HEK293 (cell line): ENCODE measurements at regions of chr19 and their contacts with region 1.

Region 1: DNA sequence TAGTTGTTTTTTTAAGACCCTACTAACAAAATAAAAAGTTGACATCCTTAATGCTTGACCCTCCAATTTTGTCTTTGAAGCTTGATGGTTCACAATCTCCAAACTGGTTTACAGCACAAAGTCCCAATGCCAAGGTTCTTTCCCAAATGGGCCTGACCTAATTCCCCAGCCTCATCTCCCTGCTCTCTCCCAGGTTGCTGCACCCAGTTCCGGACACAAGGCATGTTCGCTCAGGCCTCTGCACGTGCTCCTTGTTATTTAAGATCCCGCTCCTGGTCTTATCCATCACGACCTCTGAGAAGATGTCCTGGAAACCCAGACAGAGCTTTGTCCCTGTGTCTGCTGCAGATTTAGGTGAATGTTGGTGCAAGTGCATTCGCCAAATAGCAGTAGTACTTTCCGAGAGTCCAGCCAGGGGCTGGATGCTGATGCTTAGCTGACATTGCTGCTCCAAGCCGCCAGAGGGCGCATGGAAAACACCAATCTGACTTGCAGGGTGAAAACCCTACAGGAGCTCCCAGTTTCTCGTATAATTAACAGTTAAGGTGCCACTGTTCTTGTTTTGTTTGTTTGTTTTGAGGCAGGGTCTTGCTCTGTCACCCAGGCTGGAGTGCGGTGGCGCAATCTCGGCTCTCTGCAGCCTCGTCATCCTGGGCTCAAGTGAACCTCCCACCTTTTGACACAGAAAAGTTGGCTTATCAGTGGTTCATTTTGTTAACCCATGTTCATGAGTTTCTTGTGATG is 18.5 kb downstream of the LYPD3 start:
- H3K4me3 ChIP-seq: no peak overlapping the region
- H3K27ac ChIP-seq: no peak overlapping the region
- H3K4me1 ChIP-seq: no peaks in the 10 kb centered on the region
- CTCF ChIP-seq: peak; percentile 97

Region 2: DNA sequence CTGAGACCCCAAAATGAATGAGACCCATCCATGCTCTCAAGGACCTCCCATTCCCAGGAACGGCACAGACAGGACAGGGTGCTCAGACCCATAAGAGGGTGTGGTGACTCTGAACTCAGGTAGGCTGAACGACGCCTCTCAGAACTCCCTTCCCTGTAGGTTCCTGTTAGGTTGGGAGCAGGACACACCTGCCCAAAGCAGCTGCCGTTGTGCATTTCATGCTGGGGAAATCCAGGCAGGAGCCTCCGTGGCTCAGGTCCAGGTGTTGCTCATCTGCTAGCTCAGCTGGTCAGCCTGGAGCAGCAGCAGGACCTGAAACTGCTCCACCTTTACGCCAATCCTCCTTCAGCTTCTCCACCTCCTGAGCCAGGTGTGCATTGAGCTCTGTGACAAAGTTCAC is 51.4 kb before region 1 on chr19:
- CTCF ChIA-PET with region 1: interaction called, 13 read pairs
- POLR2A ChIA-PET with region 1: no interaction called
- H3K4me3 ChIP-seq: no peak overlapping the region
- H3K27ac ChIP-seq: no peak overlapping the region
- H3K4me1 ChIP-seq: peaks cover 23% of the 10 kb centered on the region
- CTCF ChIP-seq: no peak

Region 3: GRCh38 chr19:43463381-43464136 is 16.6 kb after region 1 on chr19:
- CTCF ChIA-PET with region 1: interaction called, 180 read pairs
- POLR2A ChIA-PET with region 1: interaction called, 6 read pairs
- H3K4me3 ChIP-seq: peak overlapping the region; percentile 64
- H3K27ac ChIP-seq: peak overlapping the region; percentile 48; the same call in 1 of the 2 replicates
- H3K4me1 ChIP-seq: peaks cover 13% of the 10 kb centered on the region; the same call in 1 of the 2 replicates
- CTCF ChIP-seq: no peak

Region 4: DNA sequence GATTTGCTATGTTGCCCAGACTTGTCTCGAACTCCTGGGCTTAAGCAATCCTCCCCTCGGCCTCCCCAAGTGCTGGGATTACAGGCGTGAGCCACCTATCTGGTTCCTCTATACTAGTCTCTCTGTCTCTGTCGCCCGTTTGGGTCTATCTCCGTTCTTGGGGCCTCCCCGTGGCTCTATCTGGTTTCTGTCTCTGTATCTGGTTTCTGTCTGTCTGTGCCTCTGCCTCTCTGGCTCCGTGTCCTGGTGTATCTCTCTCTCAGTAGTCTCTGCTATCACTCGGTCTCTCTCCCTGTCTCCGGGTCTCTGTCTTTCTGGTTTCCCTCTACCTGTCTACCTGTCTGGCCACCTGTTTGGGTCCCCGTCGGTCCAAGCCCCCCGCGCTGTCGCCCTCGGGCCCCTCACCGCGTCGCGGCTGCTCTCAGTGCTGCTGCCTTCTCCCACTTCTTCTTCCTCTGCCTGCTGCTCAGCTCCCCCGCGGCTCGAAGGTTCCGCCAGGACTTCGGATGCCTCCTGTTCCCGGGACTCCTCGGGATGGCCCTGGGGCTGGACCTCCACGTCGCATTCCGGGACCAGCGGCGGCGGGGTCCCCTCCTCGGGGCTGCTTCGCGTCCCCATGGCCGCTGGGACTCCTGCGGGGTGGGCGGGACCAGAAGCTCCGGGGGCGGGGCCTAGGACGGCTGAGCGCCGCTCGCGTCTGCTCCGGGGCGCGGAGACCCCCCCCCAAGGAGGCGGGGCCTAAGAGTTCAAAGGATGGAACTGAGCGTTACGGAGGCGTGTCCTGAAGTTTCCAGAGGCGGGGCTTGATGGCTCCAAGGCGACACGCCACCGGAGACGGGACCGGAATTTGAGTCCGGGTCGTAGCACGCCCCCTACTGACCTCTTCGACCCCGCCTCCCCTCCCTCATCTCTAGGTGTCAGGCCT is 56.8 kb after region 1 on chr19:
- CTCF ChIA-PET with region 1: interaction called, 97 read pairs
- POLR2A ChIA-PET with region 1: interaction called, 4 read pairs
- H3K4me3 ChIP-seq: peak overlapping the region; percentile 78
- H3K27ac ChIP-seq: peak overlapping the region; percentile 77
- H3K4me1 ChIP-seq: peaks cover 15% of the 10 kb centered on the region; the same call in 1 of the 2 replicates
- CTCF ChIP-seq: peak; percentile 96

Region 5: GRCh38 chr19:43532962-43533545 is 86.1 kb after region 1 on chr19 and contains the start of gene ZNF575:
- CTCF ChIA-PET with region 1: interaction called, 749 read pairs
- POLR2A ChIA-PET with region 1: interaction called, 4 read pairs
- H3K4me3 ChIP-seq: peak within 1 kb of the TSS; percentile 9
- H3K27ac ChIP-seq: peak within 1 kb of the TSS; percentile 73
- H3K4me1 ChIP-seq: peaks cover 26% of the 10 kb centered on the region
- CTCF ChIP-seq: no peak; the same call in 1 of the 2 replicates

Region 6: DNA sequence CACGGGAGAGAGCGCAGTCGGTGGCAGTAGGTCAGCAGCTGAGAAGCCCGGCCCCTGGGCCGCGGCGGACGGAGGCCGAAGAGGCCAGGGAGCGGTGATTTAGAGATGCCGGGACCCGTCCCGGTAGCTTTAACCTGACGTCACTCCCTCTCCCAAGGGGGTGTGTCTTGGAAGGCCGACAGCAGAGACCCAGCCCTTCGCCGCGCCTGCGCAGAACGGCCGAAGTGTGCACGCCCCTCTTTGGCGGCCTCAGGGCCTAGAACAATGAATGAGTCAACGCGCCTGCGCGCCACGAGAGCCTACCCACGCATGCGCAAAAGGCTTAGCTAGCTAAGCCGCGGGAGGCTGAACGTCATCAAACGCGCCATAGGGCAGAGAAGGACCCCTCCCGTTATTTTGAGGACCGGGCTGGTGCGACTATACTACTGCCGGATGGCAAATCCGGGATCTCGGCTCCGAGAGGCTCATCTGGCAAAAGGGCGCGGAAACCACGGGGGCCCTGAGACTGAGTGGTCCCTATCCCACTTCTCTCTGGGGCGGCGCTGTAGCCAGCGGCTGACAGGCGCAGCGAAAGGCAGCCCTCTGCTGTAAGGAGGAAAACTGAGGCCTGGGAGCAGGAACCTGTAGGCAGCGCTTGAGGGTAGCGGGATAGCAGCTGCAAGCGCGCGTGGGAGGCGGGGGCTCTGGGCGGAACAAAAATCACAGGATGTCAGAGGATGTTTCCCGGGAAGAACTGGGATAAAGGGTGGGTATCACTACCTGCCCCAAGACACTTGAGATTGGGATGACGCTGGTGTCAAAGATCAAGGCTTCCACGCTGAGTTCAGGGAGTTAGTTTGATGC is 149.3 kb after region 1 on chr19 and contains the starts of genes IRGQ and ZNF576:
- CTCF ChIA-PET with region 1: interaction called, 39 read pairs
- POLR2A ChIA-PET with region 1: interaction called, 3 read pairs
- H3K4me3 ChIP-seq: peak within 1 kb of the TSS; percentile 54
- H3K27ac ChIP-seq: peak within 1 kb of the TSS; percentile 95
- H3K4me1 ChIP-seq: peaks cover 24% of the 10 kb centered on the region
- CTCF ChIP-seq: peak; percentile 99